Dendritic cell treated with granulocyte-macrophage colony-stimulating factor and Interleukin-4, amounts not matched to agents 40 ng/mL and 50 ng/mL, for 4 days (primary cell): ENCODE measurements at regions of chr13 and their contacts with region 1.

Region 1: GRCh38 chr13:48233046-48233907 is at the start of gene ITM2B:
- H3K4me3 Mint-ChIP-seq: peak within 1 kb of the TSS; percentile 87
- H3K27ac Mint-ChIP-seq: peak within 1 kb of the TSS; percentile 94
- H3K4me1 Mint-ChIP-seq: peaks cover 26% of the 10 kb centered on the region
- H3K27me3 Mint-ChIP-seq: peaks cover 11% of the 10 kb centered on the region

Region 2: DNA sequence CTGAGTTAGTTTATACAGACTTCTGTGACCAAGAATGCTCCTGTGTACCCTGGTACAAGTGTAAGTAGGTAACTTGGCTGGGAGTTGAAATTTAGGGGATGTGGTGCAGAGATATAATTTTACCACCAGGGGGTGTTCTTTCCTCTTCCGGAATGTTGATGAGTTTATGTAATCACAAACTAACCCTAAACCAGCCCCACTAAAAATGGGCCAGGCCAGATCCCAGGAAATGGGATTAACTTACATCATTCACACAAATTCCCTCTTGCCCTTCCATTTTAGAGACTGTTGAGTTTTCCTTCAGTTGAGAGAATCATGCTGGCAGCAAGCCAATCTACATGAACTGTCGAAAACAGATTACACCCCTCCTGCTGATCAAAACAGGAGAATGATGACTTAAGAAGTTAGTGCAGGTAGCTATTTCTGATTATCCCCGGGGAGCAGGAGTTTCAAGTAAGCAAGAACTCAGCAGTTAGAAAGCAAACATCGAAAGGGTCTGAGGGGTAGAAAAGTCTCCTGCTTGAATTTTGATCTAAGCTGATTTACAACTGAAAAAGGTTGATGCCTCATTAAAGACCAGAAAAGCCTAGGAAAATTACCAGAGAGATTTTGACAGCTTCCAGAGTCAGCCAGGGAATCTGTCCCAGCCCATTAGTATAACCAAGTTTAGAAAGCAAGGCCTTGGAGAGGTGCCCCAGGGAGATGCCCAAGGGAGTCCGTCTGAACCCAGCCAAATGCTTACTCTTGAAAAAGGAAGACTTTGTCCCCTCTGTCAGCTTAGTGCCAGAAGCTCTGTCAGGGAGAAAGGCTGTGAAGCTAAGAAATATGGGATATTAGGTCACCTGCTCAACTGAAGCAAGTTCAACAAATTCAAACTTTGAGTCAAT is 106.1 kb before region 1 on chr13:
- intact Hi-C with region 1: loop called (anchors 2 kb)
- H3K4me3 Mint-ChIP-seq: no peak overlapping the region
- H3K27ac Mint-ChIP-seq: peak overlapping the region; percentile 67
- H3K4me1 Mint-ChIP-seq: peaks cover 20% of the 10 kb centered on the region
- H3K27me3 Mint-ChIP-seq: peaks cover 1% of the 10 kb centered on the region

Region 3: DNA sequence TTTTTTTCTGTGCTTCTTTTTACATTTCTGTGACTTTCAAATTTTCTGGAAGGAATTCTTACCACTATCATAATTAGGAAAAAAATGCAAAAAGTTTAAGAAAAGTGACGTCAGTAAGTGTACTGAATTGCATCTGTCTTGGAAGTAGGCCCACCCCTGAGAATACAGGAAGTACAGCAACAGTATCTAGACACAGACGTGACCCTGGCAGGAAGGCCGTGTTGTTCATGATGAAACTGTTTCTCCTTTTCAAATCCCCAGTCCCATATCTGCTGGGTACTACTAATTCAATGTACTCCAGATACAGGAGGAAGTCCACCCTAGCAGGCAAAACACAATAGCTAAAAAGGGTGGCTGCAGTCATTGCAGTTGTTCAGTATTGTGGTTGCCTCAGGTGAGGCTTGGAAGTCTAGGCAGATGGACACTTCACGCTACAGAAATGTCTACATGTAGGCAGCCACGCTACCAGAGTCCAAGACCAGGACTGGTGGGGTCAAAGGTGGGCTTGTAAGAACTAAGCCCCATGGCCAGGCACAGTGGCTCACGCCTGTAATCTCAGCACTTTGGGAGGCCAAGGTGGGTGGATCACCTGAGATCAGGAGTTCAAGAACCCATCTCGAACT is 88.8 kb before region 1 on chr13:
- intact Hi-C with region 1: loop called (anchors 5 kb)
- H3K4me3 Mint-ChIP-seq: no peak overlapping the region
- H3K27ac Mint-ChIP-seq: peak overlapping the region; percentile 71
- H3K4me1 Mint-ChIP-seq: peaks cover 62% of the 10 kb centered on the region
- H3K27me3 Mint-ChIP-seq: peaks cover 2% of the 10 kb centered on the region

Region 4: DNA sequence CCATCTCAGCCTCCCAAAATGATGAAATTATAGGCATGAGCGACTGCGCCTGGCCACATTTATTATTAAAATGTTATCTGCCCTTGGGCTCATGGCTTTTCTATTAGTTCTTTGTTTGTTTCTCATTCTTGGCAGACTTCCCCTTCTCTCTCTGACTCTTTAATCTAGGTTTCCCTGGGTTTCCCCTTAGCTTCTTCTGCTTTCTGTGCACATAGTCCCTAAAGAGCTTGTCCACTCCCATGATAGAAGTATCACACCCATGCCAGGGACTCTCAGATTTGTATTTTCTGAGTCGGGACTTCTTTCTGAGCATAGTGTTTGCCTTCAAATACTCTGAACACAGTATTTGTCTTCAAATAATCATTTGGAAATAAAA is 38.9 kb before region 1 on chr13:
- intact Hi-C with region 1: loop called (anchors 2 kb)
- H3K4me3 Mint-ChIP-seq: peak overlapping the region; percentile 20
- H3K27ac Mint-ChIP-seq: peak overlapping the region; percentile 83
- H3K4me1 Mint-ChIP-seq: peaks cover 40% of the 10 kb centered on the region
- H3K27me3 Mint-ChIP-seq: no peaks in the 10 kb centered on the region

Region 5: DNA sequence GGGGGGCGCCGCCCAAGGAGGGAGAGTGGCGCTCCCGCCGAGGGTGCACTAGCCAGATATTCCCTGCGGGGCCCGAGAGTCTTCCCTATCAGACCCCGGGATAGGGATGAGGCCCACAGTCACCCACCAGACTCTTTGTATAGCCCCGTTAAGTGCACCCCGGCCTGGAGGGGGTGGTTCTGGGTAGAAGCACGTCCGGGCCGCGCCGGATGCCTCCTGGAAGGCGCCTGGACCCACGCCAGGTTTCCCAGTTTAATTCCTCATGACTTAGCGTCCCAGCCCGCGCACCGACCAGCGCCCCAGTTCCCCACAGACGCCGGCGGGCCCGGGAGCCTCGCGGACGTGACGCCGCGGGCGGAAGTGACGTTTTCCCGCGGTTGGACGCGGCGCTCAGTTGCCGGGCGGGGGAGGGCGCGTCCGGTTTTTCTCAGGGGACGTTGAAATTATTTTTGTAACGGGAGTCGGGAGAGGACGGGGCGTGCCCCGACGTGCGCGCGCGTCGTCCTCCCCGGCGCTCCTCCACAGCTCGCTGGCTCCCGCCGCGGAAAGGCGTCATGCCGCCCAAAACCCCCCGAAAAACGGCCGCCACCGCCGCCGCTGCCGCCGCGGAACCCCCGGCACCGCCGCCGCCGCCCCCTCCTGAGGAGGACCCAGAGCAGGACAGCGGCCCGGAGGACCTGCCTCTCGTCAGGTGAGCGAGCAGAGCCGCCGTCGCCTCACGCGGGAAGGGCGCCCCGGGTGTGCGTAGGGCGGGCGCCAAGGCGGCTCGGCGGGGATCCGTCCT is 70.3 kb after region 1 on chr13 and contains the start of gene RB1:
- intact Hi-C with region 1: loop called (anchors 1 kb)
- H3K4me3 Mint-ChIP-seq: peak within 1 kb of the TSS; percentile 77
- H3K27ac Mint-ChIP-seq: peak within 1 kb of the TSS; percentile 95
- H3K4me1 Mint-ChIP-seq: peaks cover 33% of the 10 kb centered on the region
- H3K27me3 Mint-ChIP-seq: no peaks in the 10 kb centered on the region